CD4-positive, alpha-beta T cell (primary cell): ENCODE measurements at regions of chr17 and their contacts with region 1.

Region 1: DNA sequence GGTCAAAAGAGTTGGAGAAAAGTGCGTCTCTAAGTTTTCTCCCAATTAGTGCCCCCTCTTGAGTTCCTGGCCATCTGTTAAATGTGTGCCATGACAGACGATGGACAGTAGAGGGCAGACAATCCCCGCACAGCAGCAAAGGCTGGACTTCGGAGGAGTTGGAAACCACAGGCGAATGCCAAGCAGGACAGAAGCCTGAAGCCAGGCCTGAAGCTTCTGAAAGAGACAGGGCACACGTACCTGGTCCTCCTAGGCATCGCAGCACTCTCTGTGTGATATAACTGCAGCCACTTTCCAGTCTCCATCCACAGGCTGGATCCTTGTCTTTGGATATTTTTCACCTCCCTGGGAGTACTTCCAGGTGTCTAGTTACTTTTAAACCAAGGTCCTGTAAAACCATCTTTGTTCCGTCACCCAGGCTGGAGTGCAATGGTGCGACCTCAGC is 14.5 kb downstream of the C17orf100 start:
- DNase-seq: peak in 11 of 14 experiments; percentile 19 to 73 (median 27)
- ATAC-seq: peak; percentile 73
- H3K4me3 ChIP-seq: no peak overlapping the region
- H3K4me3 Mint-ChIP-seq: no peak overlapping the region
- H3K27ac ChIP-seq: no peak overlapping the region
- H3K27ac Mint-ChIP-seq: no peak overlapping the region
- H3K4me1 ChIP-seq: peaks cover 4% of the 10 kb centered on the region
- H3K4me1 Mint-ChIP-seq: peaks cover 4% of the 10 kb centered on the region
- H3K27me3 ChIP-seq: no peaks in the 10 kb centered on the region
- H3K27me3 Mint-ChIP-seq: no peaks in the 10 kb centered on the region
- CTCF ChIP-seq: peak; percentile 84

Region 2: GRCh38 chr17:6677158-6677831 is 11.2 kb after region 1 on chr17:
- CTCF ChIA-PET with region 1: no interaction called
- POLR2A ChIA-PET with region 1: no interaction called
- intact Hi-C with region 1: no loop called
- DNase-seq: no peak
- ATAC-seq: no peak
- H3K4me3 ChIP-seq: no peak overlapping the region
- H3K4me3 Mint-ChIP-seq: no peak overlapping the region
- H3K27ac ChIP-seq: no peak overlapping the region
- H3K27ac Mint-ChIP-seq: no peak overlapping the region
- H3K4me1 ChIP-seq: peaks cover 9% of the 10 kb centered on the region
- H3K4me1 Mint-ChIP-seq: peaks cover 10% of the 10 kb centered on the region
- H3K27me3 ChIP-seq: peaks cover 10 to 32% of the 10 kb centered on the region in 2 experiments
- H3K27me3 Mint-ChIP-seq: peaks cover 28% of the 10 kb centered on the region
- CTCF ChIP-seq: no peak

Region 3: GRCh38 chr17:6800422-6801027 is 134.4 kb after region 1 on chr17:
- CTCF ChIA-PET with region 1: no interaction called
- POLR2A ChIA-PET with region 1: no interaction called
- intact Hi-C with region 1: loop called in 1 of 2 experiments (anchors 2 kb)
- DNase-seq: peak in 2 of 14 experiments; percentile 20 to 39
- ATAC-seq: no peak
- H3K4me3 ChIP-seq: no peak overlapping the region
- H3K4me3 Mint-ChIP-seq: no peak overlapping the region
- H3K27ac ChIP-seq: no peak overlapping the region
- H3K27ac Mint-ChIP-seq: no peak overlapping the region
- H3K4me1 ChIP-seq: no peaks in the 10 kb centered on the region
- H3K4me1 Mint-ChIP-seq: no peaks in the 10 kb centered on the region
- H3K27me3 ChIP-seq: no peaks in the 10 kb centered on the region
- H3K27me3 Mint-ChIP-seq: no peaks in the 10 kb centered on the region
- CTCF ChIP-seq: peak; percentile 39

Region 4: GRCh38 chr17:6843241-6843880 is 177.3 kb after region 1 on chr17:
- CTCF ChIA-PET with region 1: no interaction called
- POLR2A ChIA-PET with region 1: no interaction called
- intact Hi-C with region 1: loop called (anchors 2 to 5 kb)
- DNase-seq: peak in 3 of 14 experiments; percentile 45 to 68 (median 68)
- ATAC-seq: no peak
- H3K4me3 ChIP-seq: no peak overlapping the region
- H3K4me3 Mint-ChIP-seq: no peak overlapping the region
- H3K27ac ChIP-seq: no peak overlapping the region
- H3K27ac Mint-ChIP-seq: no peak overlapping the region
- H3K4me1 ChIP-seq: no peaks in the 10 kb centered on the region
- H3K4me1 Mint-ChIP-seq: no peaks in the 10 kb centered on the region
- H3K27me3 ChIP-seq: peaks cover 13 to 24% of the 10 kb centered on the region in 2 experiments
- H3K27me3 Mint-ChIP-seq: peaks cover 55% of the 10 kb centered on the region
- CTCF ChIP-seq: peak; percentile 74

Region 5: DNA sequence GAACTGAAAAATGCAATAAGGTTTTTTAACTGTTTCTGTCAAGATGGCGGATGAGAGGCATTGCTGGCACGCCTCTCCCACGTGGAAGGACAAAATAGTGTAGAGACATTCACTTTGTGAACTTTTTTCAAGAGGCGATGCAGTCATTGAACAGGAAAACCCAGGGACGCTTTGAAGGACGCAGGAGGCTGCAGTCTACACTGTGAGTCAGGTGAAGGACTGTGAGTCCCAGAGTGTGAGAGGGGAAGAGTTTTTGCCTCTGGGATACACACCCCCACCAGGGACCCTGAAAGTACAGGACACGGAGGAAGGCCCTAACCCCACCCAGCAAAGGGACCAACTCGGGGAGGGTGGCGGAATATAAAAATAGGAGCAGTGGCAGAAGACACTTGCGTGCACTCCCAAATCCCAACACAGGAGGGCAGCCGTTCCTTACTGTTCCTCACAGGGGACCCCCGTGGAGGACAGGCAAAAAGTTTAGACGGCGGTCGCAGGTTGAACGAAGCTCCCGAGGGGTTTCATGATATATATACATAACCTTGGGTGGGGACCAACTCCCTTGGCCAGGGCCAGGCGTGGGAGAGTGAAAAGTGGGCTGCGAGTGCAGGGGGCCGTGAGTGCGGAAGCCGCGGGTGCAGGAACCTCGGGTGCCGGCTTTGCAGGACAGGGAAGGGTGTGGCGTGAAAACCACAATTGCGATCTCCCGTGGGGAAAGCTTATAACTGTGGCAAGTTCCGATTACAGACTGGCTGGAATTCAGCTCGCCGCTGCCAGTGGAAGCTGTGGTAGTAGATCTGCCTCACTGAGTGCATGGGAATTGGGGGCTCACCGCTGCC is 247.7 kb after region 1 on chr17:
- CTCF ChIA-PET with region 1: no interaction called
- POLR2A ChIA-PET with region 1: no interaction called
- intact Hi-C with region 1: loop called in 1 of 2 experiments (anchors 10 kb)
- DNase-seq: peak; percentile 54 to 83 (median 72)
- ATAC-seq: peak; percentile 86
- H3K4me3 ChIP-seq: peak overlapping the region; percentile 39
- H3K4me3 Mint-ChIP-seq: peak overlapping the region; percentile 81
- H3K27ac ChIP-seq: no peak overlapping the region
- H3K27ac Mint-ChIP-seq: no peak overlapping the region
- H3K4me1 ChIP-seq: peaks cover 11% of the 10 kb centered on the region
- H3K4me1 Mint-ChIP-seq: peaks cover 34% of the 10 kb centered on the region
- H3K27me3 ChIP-seq: peaks cover 0 to 6% of the 10 kb centered on the region in 2 experiments
- H3K27me3 Mint-ChIP-seq: peaks cover 13% of the 10 kb centered on the region
- CTCF ChIP-seq: peak; percentile 87